Naive thymus-derived CD4-positive, alpha-beta T cell (primary cell): ENCODE measurements at regions of chr16 and their contacts with region 1.

Region 1: DNA sequence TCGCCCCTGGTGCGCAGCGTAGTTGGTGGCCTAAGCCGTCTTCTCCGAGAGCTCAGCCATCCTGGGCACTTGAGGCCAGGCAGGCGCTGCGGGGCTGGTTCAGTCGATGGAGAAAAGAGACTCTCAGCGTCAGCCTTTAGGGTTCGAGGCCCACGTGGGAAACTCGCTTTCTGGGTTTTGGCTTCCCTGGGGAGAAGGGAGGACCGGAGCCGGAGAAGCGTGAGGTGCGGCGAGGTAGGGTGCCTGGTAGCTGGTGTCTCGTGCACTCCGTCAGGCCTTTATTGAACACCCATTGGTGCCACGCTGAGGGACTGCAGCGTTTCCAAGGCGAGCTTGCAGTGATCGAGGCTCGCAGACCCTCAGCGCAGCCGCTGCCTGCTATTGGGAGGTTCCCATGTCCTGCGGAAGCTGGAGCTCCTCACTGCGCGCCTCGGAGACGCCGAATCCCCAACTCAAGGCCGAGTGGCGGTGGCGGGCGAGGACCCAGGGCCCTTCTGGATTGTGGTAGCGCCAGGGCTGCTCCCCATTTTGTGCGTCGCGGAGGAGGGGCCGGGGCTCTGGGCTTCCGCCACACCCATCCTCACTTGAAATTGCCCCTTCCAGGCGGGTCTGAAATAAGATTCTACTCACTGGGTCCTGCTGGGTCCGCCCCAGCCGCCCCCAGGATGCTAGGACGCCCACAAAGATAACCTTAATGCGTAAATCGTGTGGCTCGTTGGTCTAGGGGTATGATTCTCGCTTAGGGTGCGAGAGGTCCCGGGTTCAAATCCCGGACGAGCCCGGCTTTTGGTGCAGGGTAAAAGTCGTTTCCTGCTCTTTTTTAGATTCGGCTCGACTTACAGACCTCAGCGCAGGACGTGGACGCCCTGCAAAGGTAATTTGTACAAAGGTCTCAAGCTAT is 1.2 kb downstream of the OR1F1 start:
- DNase-seq: peak in 2 of 9 donors; percentile 32 to 53
- ATAC-seq: peak; percentile 44
- H3K4me3 ChIP-seq: peak overlapping the region; percentile 6
- H3K4me3 Mint-ChIP-seq: peak overlapping the region; percentile 64 to 86 (median 78)
- H3K27ac ChIP-seq: no peak overlapping the region
- H3K27ac Mint-ChIP-seq: peak overlapping the region in 7 of 9 donors; percentile 28 to 88 (median 72)
- H3K4me1 ChIP-seq: peaks cover 23 to 26% of the 10 kb centered on the region in 2 donors
- H3K4me1 Mint-ChIP-seq: peaks cover 31 to 49% (median 43%) of the 10 kb centered on the region in 7 donors
- H3K27me3 ChIP-seq: peaks cover 28 to 32% of the 10 kb centered on the region in 2 donors
- H3K27me3 Mint-ChIP-seq: peaks cover 65 to 74% (median 72%) of the 10 kb centered on the region in 5 donors

Region 2: DNA sequence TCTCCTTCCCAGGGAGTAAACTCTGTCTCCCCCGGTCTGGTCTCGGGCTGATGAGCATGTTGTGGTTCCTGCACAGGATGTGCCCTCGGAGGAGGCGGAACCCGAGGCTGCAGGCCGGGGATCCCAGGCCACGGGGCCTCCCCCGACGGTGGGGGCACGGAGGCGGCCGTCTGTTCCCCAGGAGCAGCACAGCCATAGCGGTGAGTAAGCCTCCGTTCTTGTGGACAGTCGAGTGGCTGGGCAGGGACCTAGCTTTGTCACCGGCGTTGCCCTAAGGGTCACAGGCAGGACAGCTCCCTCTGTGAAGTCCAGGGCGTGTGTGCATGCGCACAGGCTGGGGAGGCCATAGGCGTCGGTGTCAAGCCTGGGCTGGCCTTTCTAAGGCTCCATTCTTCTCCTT is 50.8 kb before region 1 on chr16:
- CTCF ChIA-PET with region 1: no interaction called
- POLR2A ChIA-PET with region 1: no interaction called
- intact Hi-C with region 1: no loop called
- DNase-seq: no peak
- ATAC-seq: no peak
- H3K4me3 ChIP-seq: no peak overlapping the region
- H3K4me3 Mint-ChIP-seq: no peak overlapping the region
- H3K27ac ChIP-seq: no peak overlapping the region
- H3K27ac Mint-ChIP-seq: no peak overlapping the region
- H3K4me1 ChIP-seq: peaks cover 0 to 6% of the 10 kb centered on the region in 2 donors
- H3K4me1 Mint-ChIP-seq: peaks cover 5 to 31% (median 24%) of the 10 kb centered on the region in 7 donors
- H3K27me3 ChIP-seq: no peaks in the 10 kb centered on the region
- H3K27me3 Mint-ChIP-seq: no peaks in the 10 kb centered on the region

Region 3: DNA sequence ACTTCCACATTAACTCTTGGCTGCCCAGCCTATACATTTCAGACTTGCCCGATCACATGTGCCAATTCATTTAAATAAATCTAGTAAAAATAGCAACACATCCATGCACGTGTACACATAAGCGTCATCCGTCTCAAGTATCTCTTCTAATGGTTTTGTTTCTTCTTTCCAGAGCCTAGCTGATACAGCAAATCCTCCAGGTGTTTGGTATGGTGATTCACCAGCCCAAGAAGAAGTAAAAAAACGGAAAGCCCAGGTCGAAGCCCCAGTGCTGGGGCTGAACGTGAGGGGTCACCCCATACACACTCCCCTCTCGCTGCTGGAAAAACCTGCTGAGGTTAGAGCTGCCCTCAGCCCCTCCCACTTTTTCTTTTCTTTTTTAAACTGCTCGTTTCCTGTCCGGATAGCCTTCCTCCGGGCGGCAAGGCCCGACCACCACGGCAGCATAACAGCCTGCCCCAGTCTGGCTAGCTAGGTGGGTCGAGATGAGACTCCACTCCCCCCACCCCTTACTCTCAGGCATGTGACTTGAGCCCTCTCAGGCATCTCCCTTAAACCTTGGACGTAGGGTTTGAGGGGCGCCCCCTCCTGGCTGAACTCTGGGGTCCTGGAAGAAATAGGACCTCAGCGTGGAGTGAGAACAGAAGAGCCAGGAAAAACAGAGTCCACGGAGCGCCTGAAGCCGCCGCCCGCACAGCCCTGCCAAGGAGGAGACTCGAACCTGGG is 15.1 kb before region 1 on chr16:
- CTCF ChIA-PET with region 1: no interaction called
- POLR2A ChIA-PET with region 1: interaction called, 23 read pairs
- intact Hi-C with region 1: loop called (anchors 2 kb)
- DNase-seq: no peak
- ATAC-seq: peak; percentile 13
- H3K4me3 ChIP-seq: no peak overlapping the region
- H3K4me3 Mint-ChIP-seq: peak overlapping the region in 9 of 10 donors; percentile 22 to 70 (median 54)
- H3K27ac ChIP-seq: no peak overlapping the region
- H3K27ac Mint-ChIP-seq: peak overlapping the region in 5 of 9 donors; percentile 2 to 71 (median 18)
- H3K4me1 ChIP-seq: peaks cover 29 to 39% of the 10 kb centered on the region in 2 donors
- H3K4me1 Mint-ChIP-seq: peaks cover 21 to 42% (median 34%) of the 10 kb centered on the region in 7 donors
- H3K27me3 ChIP-seq: peaks cover 3 to 37% of the 10 kb centered on the region in 2 donors
- H3K27me3 Mint-ChIP-seq: peaks cover 46 to 81% (median 53%) of the 10 kb centered on the region in 5 donors

Region 4: GRCh38 chr16:3234543-3235541 is 45.7 kb after region 1 on chr16 and contains the start of gene ZNF200:
- CTCF ChIA-PET with region 1: interaction called, 4 read pairs
- POLR2A ChIA-PET with region 1: interaction called, 6 read pairs
- intact Hi-C with region 1: loop called (anchors 2 to 5 kb)
- DNase-seq: peak; percentile 85 to 96 (median 94)
- ATAC-seq: peak; percentile 94
- H3K4me3 ChIP-seq: peak within 1 kb of the TSS; percentile 98
- H3K4me3 Mint-ChIP-seq: peak within 1 kb of the TSS; percentile 88 to 97 (median 94)
- H3K27ac ChIP-seq: peak within 1 kb of the TSS; percentile 90
- H3K27ac Mint-ChIP-seq: peak within 1 kb of the TSS; percentile 93 to 98 (median 97)
- H3K4me1 ChIP-seq: peaks cover 18 to 23% of the 10 kb centered on the region in 2 donors
- H3K4me1 Mint-ChIP-seq: peaks cover 20 to 48% (median 39%) of the 10 kb centered on the region in 7 donors
- H3K27me3 ChIP-seq: no peaks in the 10 kb centered on the region
- H3K27me3 Mint-ChIP-seq: peaks cover 0 to 3% (median 0%) of the 10 kb centered on the region in 5 donors
- total RNA-seq, gene ZNF200: 4.8 to 33.3 (median 16.6) TPM